CD8-positive, alpha-beta memory T cell (primary cell): ENCODE measurements at regions of chr14 and their contacts with region 1.

Region 1: GRCh38 chr14:99415496-99416281 is 65.0 kb downstream of the SETD3 start:
- DNase-seq: peak; percentile 30 to 76 (median 65)
- H3K4me3 ChIP-seq: no peak overlapping the region
- H3K4me3 Mint-ChIP-seq: no peak overlapping the region
- H3K27ac ChIP-seq: no peak overlapping the region
- H3K27ac Mint-ChIP-seq: peak overlapping the region in 5 of 8 donors; percentile 3 to 88 (median 28)
- H3K4me1 ChIP-seq: peaks cover 5% of the 10 kb centered on the region
- H3K4me1 Mint-ChIP-seq: peaks cover 13 to 15% (median 14%) of the 10 kb centered on the region in 3 donors
- H3K27me3 ChIP-seq: no peaks in the 10 kb centered on the region
- H3K27me3 Mint-ChIP-seq: no peaks in the 10 kb centered on the region

Region 2: GRCh38 chr14:99320105-99320572 is 95.5 kb before region 1 on chr14:
- CTCF ChIA-PET with region 1: interaction called, 26 read pairs
- POLR2A ChIA-PET with region 1: no interaction called
- DNase-seq: peak; percentile 51 to 78 (median 68)
- H3K4me3 ChIP-seq: no peak overlapping the region
- H3K4me3 Mint-ChIP-seq: peak overlapping the region in 3 of 7 donors; percentile 22 to 61 (median 44)
- H3K27ac ChIP-seq: no peak overlapping the region
- H3K27ac Mint-ChIP-seq: peak overlapping the region in 2 of 8 donors; percentile 68 to 90
- H3K4me1 ChIP-seq: no peaks in the 10 kb centered on the region
- H3K4me1 Mint-ChIP-seq: peaks cover 14 to 28% (median 23%) of the 10 kb centered on the region in 3 donors
- H3K27me3 ChIP-seq: no peaks in the 10 kb centered on the region
- H3K27me3 Mint-ChIP-seq: peaks cover 0 to 1% of the 10 kb centered on the region in 2 donors

Region 3: DNA sequence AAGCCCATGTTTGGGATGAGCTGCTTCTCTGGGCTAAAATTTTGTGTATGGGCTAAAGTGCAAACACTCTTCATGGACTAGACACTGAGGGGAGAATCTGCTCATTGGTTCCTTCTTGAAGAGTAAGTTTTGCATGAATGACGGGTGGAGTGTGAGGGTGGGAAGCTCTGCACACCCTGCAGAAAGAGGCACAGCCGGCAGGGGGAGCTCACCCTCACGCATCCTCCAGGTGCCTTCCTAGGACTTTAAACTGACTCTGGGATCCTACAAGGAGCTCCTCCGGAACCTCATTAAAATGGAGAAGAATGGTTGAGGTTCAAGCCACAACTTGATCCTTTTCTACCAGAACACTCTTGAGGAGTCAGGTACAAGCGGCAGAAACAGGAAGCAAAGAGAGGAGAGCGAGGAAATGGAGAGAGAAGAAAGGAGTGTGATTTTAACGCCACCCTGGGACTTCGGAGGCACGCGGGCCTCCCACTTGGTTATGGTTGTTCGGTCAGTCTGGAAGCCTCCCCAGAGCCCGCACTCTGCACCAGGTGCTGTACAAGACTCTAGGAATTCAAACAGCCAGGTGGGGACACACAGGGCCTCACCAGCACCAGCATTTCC is 22.5 kb before region 1 on chr14:
- CTCF ChIA-PET with region 1: interaction called, 15 read pairs
- POLR2A ChIA-PET with region 1: no interaction called
- DNase-seq: peak in 1 of 5 donors; percentile 4
- H3K4me3 ChIP-seq: no peak overlapping the region
- H3K4me3 Mint-ChIP-seq: peak overlapping the region in 1 of 7 donors; percentile 2
- H3K27ac ChIP-seq: no peak overlapping the region
- H3K27ac Mint-ChIP-seq: peak overlapping the region in 4 of 8 donors; percentile 4 to 76 (median 44)
- H3K4me1 ChIP-seq: no peaks in the 10 kb centered on the region
- H3K4me1 Mint-ChIP-seq: peaks cover 13 to 29% (median 20%) of the 10 kb centered on the region in 3 donors
- H3K27me3 ChIP-seq: no peaks in the 10 kb centered on the region
- H3K27me3 Mint-ChIP-seq: no peaks in the 10 kb centered on the region

Region 4: DNA sequence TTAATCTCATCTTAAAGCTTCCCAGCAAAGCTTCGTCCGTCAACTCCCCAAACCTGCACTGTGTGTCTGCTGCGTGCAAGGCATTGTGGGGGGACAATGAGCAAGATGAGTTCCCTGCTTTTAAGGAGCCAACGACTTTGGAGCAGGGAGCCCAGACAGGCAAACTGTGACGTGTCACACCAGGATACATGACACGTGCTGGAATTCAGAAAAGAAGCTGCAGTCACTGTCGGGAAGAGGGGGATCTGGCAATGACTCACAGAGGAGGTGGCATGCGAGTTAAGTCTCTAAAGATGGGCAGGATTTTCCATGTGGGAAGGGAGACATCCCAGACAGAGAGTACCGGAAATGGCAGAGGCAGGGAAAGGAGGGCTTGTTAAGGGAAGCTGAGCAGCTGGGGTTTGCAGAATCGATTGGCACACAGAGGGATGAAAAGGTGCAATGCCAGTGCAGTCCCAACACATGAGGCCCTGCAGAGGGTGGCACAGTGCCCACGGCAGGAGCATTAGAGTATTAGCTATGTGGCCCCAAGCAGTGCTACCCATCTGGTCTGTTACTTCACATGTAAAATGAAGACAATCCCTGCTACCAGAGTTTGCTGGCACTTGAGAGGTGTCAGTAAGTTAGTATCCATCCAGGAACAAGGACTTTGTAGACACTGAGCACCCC is 12.1 kb after region 1 on chr14:
- CTCF ChIA-PET with region 1: interaction called, 19 read pairs
- POLR2A ChIA-PET with region 1: no interaction called
- DNase-seq: no peak
- H3K4me3 ChIP-seq: no peak overlapping the region
- H3K4me3 Mint-ChIP-seq: no peak overlapping the region
- H3K27ac ChIP-seq: no peak overlapping the region
- H3K27ac Mint-ChIP-seq: peak overlapping the region in 3 of 8 donors; percentile 22 to 84 (median 50)
- H3K4me1 ChIP-seq: no peaks in the 10 kb centered on the region
- H3K4me1 Mint-ChIP-seq: peaks cover 19 to 30% (median 27%) of the 10 kb centered on the region in 3 donors
- H3K27me3 ChIP-seq: no peaks in the 10 kb centered on the region
- H3K27me3 Mint-ChIP-seq: no peaks in the 10 kb centered on the region